Ovary (tissue), 10 donors: ENCODE measurements at regions of chr15 and their contacts with region 1.

Region 1: GRCh38 chr15:23877502-23878412 is 190.7 kb upstream of the NDN start:
- DNase-seq: peak; percentile 49 to 73 (median 60)
- H3K4me3 ChIP-seq: no peak overlapping the region
- H3K27ac ChIP-seq: no peak overlapping the region
- H3K4me1 ChIP-seq: peaks cover 2% of the 10 kb centered on the region
- H3K27me3 ChIP-seq: no peaks in the 10 kb centered on the region
- CTCF ChIP-seq: peak; percentile 17 to 52 (median 50)
- EP300 ChIP-seq: no peak
- POLR2A ChIP-seq: no peak

Region 2: DNA sequence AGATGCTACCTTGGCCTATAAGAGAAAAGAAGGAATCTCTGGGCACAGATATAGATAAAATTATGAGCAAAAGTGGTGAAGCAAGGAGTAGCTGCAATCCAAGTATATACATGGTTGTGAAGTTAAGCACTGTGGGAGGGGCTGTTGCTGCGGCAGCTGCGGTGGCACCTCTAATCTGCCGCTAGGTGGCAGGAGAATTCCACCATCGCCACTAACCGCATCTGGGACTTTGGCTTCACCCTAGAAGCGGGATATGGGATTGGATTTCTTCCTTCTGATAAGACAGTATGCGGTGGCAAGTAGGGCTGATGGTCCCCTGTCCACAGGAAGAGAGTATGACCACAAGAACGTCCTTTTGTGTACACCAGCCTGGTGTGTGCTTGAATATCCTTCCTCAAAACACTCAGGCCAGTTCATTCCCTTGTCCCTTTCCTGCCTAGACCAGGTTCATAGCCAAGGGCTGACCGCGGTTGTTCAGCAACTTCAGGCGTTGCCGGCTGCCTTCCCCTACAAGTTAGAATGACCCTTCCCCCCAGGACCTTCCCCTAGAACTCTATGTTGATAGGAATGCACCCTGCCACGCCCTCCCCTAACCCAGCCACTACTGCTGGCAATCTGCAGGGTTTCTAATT is 235.2 kb before region 1 on chr15:
- intact Hi-C with region 1: loop called in 2 of 4 experiments (anchors 5 kb)
- DNase-seq: peak; percentile 46 to 77 (median 61)
- H3K4me3 ChIP-seq: no peak overlapping the region
- H3K27ac ChIP-seq: no peak overlapping the region
- H3K4me1 ChIP-seq: no peaks in the 10 kb centered on the region
- H3K27me3 ChIP-seq: no peaks in the 10 kb centered on the region
- CTCF ChIP-seq: peak; percentile 62 to 68 (median 67)
- EP300 ChIP-seq: no peak
- POLR2A ChIP-seq: no peak

Region 3: GRCh38 chr15:23773093-23773492 is 104.7 kb before region 1 on chr15:
- intact Hi-C with region 1: no loop called
- DNase-seq: no peak
- H3K4me3 ChIP-seq: no peak overlapping the region
- H3K27ac ChIP-seq: no peak overlapping the region
- H3K4me1 ChIP-seq: no peaks in the 10 kb centered on the region
- H3K27me3 ChIP-seq: no peaks in the 10 kb centered on the region
- CTCF ChIP-seq: no peak
- EP300 ChIP-seq: no peak
- POLR2A ChIP-seq: no peak